Right cardiac atrium (tissue), 5 donors: ENCODE measurements at regions of chr1 and their contacts with region 1.

Region 1: DNA sequence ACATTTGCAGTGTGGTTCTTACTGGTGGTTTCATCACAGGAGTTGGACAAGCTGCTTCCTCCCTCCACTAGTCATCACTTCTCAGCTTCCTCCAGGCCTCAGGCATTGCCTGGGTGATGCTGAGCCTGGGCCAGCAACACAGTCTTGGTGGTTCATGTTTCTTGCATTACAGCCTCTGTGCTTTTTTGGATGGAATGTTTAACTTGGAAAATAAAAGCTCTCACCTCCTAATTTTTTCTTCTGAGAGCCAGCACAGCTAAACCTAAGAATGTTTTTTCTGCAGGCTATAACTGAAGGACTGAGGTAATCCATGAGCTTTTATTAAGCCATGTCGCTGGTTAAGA is 66.1 kb upstream of the RHOU start:
- DNase-seq: peak; percentile 61 to 85 (median 80)
- ATAC-seq: peak; percentile 89 to 93
- H3K4me3 ChIP-seq: no peak overlapping the region
- H3K27ac ChIP-seq: no peak overlapping the region
- H3K4me1 ChIP-seq: peaks cover 3% of the 10 kb centered on the region
- H3K27me3 ChIP-seq: no peaks in the 10 kb centered on the region

Region 2: DNA sequence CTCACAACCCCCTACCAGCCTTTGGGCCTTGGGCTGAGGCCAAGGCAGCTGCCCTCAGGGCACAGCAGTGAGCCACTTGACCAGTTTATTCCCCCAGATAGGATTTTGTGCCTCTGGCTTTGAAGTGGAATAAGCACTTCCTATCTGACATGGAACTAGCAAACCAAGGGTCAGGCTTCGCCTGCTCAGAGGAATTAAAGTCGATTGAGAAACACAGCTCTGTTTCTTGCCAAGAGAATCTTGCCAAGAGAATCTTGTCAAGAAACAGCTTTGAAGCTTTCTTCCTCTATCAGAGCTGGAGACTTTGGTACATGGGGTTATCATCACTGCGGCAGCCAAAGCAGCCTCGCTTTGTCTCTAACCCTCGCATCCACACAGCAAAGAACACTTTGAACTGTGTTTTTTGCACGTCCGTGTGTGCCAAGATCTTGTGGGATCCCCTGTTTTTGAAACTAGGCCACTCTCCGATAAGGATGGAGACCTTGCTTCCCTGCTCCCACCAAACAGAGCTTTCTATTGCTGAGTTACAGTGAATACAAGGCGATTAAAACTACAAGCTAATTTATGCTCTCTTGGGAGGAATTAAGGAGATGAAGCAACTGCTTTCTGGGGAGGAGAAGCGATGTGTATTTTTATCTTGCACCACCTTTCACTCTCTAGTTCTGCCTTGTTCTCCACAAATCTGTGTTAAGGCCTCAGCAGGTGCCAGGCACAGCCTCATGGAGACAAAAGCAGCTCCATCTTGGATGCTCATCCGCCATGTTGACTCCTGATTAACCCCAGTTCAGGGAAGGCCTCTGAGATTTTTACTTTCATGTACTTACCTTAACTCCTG is 133.4 kb after region 1 on chr1:
- intact Hi-C with region 1: no loop called
- DNase-seq: peak; percentile 62 to 86 (median 65)
- ATAC-seq: peak; percentile 94
- H3K4me3 ChIP-seq: no peak overlapping the region
- H3K27ac ChIP-seq: no peak overlapping the region
- H3K4me1 ChIP-seq: no peaks in the 10 kb centered on the region
- H3K27me3 ChIP-seq: no peaks in the 10 kb centered on the region

Region 3: GRCh38 chr1:229227298-229227919 is 558.2 kb after region 1 on chr1:
- intact Hi-C with region 1: loop called in 2 of 4 experiments (anchors 5 to 10 kb)
- DNase-seq: peak; percentile 84 to 92 (median 91)
- ATAC-seq: peak; percentile 18 to 50
- H3K4me3 ChIP-seq: no peak overlapping the region
- H3K27ac ChIP-seq: no peak overlapping the region
- H3K4me1 ChIP-seq: peaks cover 7% of the 10 kb centered on the region
- H3K27me3 ChIP-seq: no peaks in the 10 kb centered on the region